Adrenal gland (tissue), 19 donors: ENCODE measurements at regions of chr7 and their contacts with region 1.

Region 1: DNA sequence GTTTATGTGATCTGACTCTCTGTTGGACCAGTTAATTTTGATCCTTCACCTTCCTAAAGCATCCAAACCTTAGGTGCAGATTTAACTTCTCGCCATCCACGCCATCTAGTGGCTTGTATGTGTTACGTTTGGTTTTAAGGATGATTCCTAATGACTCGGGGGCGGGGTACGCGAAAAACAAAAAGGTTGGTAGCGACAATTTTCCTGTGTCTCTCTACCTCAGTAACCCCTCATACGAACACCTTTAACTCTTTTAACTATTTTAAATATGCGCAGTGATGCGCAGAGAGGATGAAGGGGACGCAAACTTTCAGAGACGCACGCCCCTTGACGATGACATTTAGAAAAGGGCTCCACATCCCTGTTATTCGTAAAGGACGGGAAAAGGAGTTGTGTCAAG is 714 bp upstream of the KCND2 start:
- DNase-seq: peak in 4 of 7 donors; percentile 16 to 54 (median 28)
- H3K4me3 ChIP-seq: peak overlapping the region in 2 of 4 donors; percentile 15 to 48
- H3K27ac ChIP-seq: no peak overlapping the region
- H3K4me1 ChIP-seq: peaks cover 0 to 7% of the 10 kb centered on the region in 2 donors
- H3K27me3 ChIP-seq: peaks cover 6% of the 10 kb centered on the region
- CTCF ChIP-seq: peak; percentile 35 to 64 (median 56)
- POLR2A ChIP-seq: no peak

Region 2: DNA sequence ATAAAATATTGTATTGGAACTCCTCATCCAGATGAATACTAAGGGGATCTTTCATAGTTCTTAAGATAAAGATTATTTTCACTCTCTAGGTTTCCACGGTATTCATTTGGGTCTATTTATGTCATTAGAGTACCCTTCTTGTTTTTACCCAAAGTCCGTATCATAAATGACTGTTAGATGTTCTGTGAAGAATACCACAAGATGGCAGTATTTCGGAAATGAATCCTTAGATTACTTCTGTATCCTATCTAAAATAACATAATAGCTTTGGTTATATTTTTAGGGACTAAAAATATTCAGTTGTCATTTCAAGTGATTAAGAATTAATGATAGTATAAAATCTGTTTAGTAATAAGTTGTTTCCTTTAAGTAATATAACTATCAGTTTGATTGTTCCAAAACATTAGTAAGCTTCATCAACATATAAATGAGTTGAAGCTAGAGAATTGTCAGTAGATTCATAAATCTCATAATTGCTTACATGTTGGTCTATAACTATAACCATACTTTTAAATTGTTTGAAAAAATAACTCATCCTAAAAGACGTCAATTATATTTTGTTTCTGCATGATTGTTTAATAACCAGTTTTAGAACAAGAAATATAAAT is 336.7 kb before region 1 on chr7:
- intact Hi-C with region 1: loop called (anchors 5 to 10 kb)
- DNase-seq: no peak
- H3K4me3 ChIP-seq: no peak overlapping the region
- H3K27ac ChIP-seq: no peak overlapping the region
- H3K4me1 ChIP-seq: no peaks in the 10 kb centered on the region
- H3K27me3 ChIP-seq: no peaks in the 10 kb centered on the region
- CTCF ChIP-seq: peak; percentile 21 to 65 (median 54)
- POLR2A ChIP-seq: no peak